ENCODE measurements at regions of chr11 and their contacts with region 1.

Region 1: GRCh38 chr11:130069684-130070108 is at the start of gene APLP2:
- DNase-seq: peak; percentile 98 to 99 (median 99)
- H3K4me3 ChIP-seq: peak within 1 kb of the TSS; percentile 80 to 96 (median 96)
- H3K4me3 Mint-ChIP-seq: peak within 1 kb of the TSS; percentile 92 to 99
- H3K27ac ChIP-seq: peak within 1 kb of the TSS; percentile 76 to 86
- H3K27ac Mint-ChIP-seq: peak within 1 kb of the TSS; percentile 93 to 98 (median 97)
- H3K4me1 ChIP-seq: peaks cover 39 to 50% of the 10 kb centered on the region in 2 donors
- H3K4me1 Mint-ChIP-seq: peaks cover 45% of the 10 kb centered on the region
- H3K27me3 ChIP-seq: no peaks in the 10 kb centered on the region
- H3K27me3 Mint-ChIP-seq: no peaks in the 10 kb centered on the region
- CTCF ChIP-seq: no peak
- polyA plus RNA-seq, gene APLP2: 486 to 622 (median 591) TPM

Region 2: DNA sequence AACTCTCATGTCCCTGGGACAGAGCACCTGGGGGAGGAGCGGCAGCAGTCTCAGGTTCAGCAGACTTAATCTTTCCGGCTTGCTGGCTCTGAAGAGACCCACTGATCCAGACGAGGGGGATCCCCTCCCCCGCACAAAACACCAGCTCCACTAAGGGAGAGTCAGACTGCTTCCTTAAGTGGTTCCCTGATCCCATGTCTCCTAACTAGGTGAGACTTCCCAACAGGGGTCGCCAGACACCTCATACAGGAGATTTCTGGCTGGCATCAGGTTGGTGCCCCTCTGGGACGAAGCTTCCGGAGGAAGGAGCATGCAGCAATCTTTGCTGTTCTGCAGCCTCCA is 411.2 kb before region 1 on chr11:
- intact Hi-C with region 1: no loop called
- DNase-seq: no peak
- H3K4me3 ChIP-seq: no peak overlapping the region
- H3K4me3 Mint-ChIP-seq: no peak overlapping the region
- H3K27ac ChIP-seq: no peak overlapping the region
- H3K27ac Mint-ChIP-seq: peak overlapping the region in 1 of 7 donors; percentile 42
- H3K4me1 ChIP-seq: no peaks in the 10 kb centered on the region
- H3K4me1 Mint-ChIP-seq: no peaks in the 10 kb centered on the region
- H3K27me3 ChIP-seq: no peaks in the 10 kb centered on the region
- H3K27me3 Mint-ChIP-seq: peaks cover 0 to 2% (median 0%) of the 10 kb centered on the region in 3 donors
- CTCF ChIP-seq: no peak

Region 3: GRCh38 chr11:129922674-129923073 is 147.0 kb before region 1 on chr11:
- intact Hi-C with region 1: loop called in 1 of 2 experiments (anchors 10 kb)
- DNase-seq: no peak
- H3K4me3 ChIP-seq: no peak overlapping the region
- H3K4me3 Mint-ChIP-seq: no peak overlapping the region
- H3K27ac ChIP-seq: no peak overlapping the region
- H3K27ac Mint-ChIP-seq: no peak overlapping the region
- H3K4me1 ChIP-seq: peaks cover 16 to 28% of the 10 kb centered on the region in 2 donors
- H3K4me1 Mint-ChIP-seq: peaks cover 28% of the 10 kb centered on the region
- H3K27me3 ChIP-seq: no peaks in the 10 kb centered on the region
- H3K27me3 Mint-ChIP-seq: no peaks in the 10 kb centered on the region
- CTCF ChIP-seq: no peak

Region 4: DNA sequence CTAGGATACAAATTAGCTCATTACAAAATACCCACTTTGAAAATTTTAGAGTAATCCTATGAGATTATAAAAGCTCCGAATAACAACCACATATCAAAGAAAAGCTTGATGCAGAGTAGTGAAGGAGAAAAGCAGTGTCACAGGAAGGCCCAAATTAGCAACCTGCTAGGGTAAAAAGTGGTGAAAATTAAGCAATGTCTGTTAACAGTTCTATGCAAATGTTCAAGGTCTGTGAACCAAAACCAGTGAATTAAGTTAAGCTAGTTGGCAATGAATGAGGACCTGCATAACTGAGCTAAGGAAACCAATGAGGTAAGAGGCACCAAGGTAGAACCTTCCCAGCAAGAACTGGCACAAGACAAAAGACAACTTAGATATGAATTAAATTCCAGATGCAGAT is 96.6 kb before region 1 on chr11:
- intact Hi-C with region 1: no loop called
- DNase-seq: peak in 1 of 3 donors; percentile 8
- H3K4me3 ChIP-seq: no peak overlapping the region
- H3K4me3 Mint-ChIP-seq: no peak overlapping the region
- H3K27ac ChIP-seq: peak overlapping the region; percentile 26 to 69
- H3K27ac Mint-ChIP-seq: peak overlapping the region in 6 of 7 donors; percentile 22 to 79 (median 61)
- H3K4me1 ChIP-seq: peaks cover 51 to 75% of the 10 kb centered on the region in 2 donors
- H3K4me1 Mint-ChIP-seq: peaks cover 77% of the 10 kb centered on the region
- H3K27me3 ChIP-seq: no peaks in the 10 kb centered on the region
- H3K27me3 Mint-ChIP-seq: peaks cover 0 to 4% (median 0%) of the 10 kb centered on the region in 3 donors
- CTCF ChIP-seq: no peak

Region 5: DNA sequence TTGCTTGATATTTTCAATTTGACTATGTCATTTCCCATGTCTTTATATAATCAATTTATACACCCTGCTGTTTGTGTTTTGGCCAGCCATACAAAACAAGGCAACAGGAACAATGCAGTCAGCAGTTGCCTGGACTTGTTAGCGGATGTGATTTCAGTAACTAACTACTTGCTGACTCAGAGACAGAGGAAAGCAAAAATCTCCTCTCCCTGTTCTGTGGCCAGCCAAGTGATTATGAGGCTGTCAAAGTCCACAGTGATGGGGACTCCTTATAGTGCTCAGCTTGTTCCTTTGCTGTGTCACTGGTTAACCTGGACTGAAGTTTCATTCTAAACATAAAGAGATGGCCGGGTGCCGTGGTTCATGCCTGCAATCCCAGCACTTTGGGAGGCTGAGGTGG is 32.6 kb before region 1 on chr11:
- intact Hi-C with region 1: no loop called
- DNase-seq: peak; percentile 39 to 54 (median 50)
- H3K4me3 ChIP-seq: no peak overlapping the region
- H3K4me3 Mint-ChIP-seq: no peak overlapping the region
- H3K27ac ChIP-seq: no peak overlapping the region
- H3K27ac Mint-ChIP-seq: peak overlapping the region in 5 of 7 donors; percentile 13 to 78 (median 18)
- H3K4me1 ChIP-seq: peaks cover 7 to 23% of the 10 kb centered on the region in 2 donors
- H3K4me1 Mint-ChIP-seq: peaks cover 17% of the 10 kb centered on the region
- H3K27me3 ChIP-seq: no peaks in the 10 kb centered on the region
- H3K27me3 Mint-ChIP-seq: peaks cover 2 to 5% (median 2%) of the 10 kb centered on the region in 3 donors
- CTCF ChIP-seq: no peak

Region 6: DNA sequence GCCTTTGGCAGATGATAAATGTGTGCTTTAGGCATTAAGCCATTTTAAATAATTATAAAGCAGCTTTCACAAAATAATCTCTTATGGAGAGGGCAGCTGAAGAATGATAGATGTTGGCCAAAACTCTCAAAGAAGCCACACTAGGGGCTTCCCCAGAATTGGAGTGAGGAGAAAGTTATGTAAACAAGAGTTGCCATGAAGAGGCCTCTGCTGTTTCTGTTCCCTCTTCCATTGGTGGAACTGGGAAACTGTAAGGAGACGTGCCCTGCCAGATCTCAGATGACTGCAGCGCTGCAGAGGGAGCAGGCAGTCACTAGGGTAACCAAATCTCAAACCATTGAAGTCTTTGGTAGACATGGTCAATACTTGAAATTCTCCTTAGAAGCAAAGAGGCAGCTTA is 19.4 kb before region 1 on chr11:
- intact Hi-C with region 1: loop called in 1 of 2 experiments (anchors 2 kb)
- DNase-seq: peak; percentile 72 to 89 (median 84)
- H3K4me3 ChIP-seq: peak overlapping the region in 1 of 3 experiments; percentile 50
- H3K4me3 Mint-ChIP-seq: peak overlapping the region in 1 of 2 donors; percentile 73
- H3K27ac ChIP-seq: peak overlapping the region; percentile 84 to 95
- H3K27ac Mint-ChIP-seq: peak overlapping the region; percentile 93 to 99 (median 97)
- H3K4me1 ChIP-seq: peaks cover 56 to 72% of the 10 kb centered on the region in 2 donors
- H3K4me1 Mint-ChIP-seq: peaks cover 56% of the 10 kb centered on the region
- H3K27me3 ChIP-seq: no peaks in the 10 kb centered on the region
- H3K27me3 Mint-ChIP-seq: no peaks in the 10 kb centered on the region
- CTCF ChIP-seq: no peak

Region 7: GRCh38 chr11:130124096-130124495 is 54.4 kb after region 1 on chr11:
- intact Hi-C with region 1: loop called (anchors 2 to 5 kb)
- DNase-seq: peak; percentile 95 to 99 (median 98)
- H3K4me3 ChIP-seq: peak overlapping the region in 1 of 3 experiments; percentile 60
- H3K4me3 Mint-ChIP-seq: peak overlapping the region; percentile 62 to 72
- H3K27ac ChIP-seq: peak overlapping the region; percentile 91 to 96
- H3K27ac Mint-ChIP-seq: peak overlapping the region; percentile 98 to 100 (median 100)
- H3K4me1 ChIP-seq: peaks cover 77 to 85% of the 10 kb centered on the region in 2 donors
- H3K4me1 Mint-ChIP-seq: peaks cover 80% of the 10 kb centered on the region
- H3K27me3 ChIP-seq: no peaks in the 10 kb centered on the region
- H3K27me3 Mint-ChIP-seq: peaks cover 0 to 4% (median 2%) of the 10 kb centered on the region in 3 donors
- CTCF ChIP-seq: no peak

Region 8: DNA sequence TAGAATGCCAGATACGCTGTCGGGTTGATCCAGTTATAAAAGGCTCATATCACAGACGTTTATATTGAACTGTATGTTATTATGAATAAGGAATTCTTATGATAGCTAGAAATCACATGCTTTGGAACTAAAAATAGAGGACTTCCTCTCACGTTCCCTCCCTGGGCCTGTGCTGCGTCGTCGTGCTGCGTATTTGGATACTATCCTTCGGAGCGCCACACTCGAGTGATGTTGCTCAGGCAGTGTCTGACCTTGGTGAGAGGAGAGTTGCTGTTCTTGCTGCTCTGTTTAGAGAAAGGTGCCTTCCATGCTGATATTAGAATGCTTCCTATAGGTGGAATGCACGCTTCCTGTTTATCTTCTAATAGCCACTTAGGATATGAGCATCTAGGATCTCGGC is 69.7 kb after region 1 on chr11:
- intact Hi-C with region 1: no loop called
- DNase-seq: no peak
- H3K4me3 ChIP-seq: no peak overlapping the region
- H3K4me3 Mint-ChIP-seq: no peak overlapping the region
- H3K27ac ChIP-seq: peak overlapping the region in 1 of 2 donors; percentile 57
- H3K27ac Mint-ChIP-seq: peak overlapping the region in 2 of 7 donors; percentile 21 to 64
- H3K4me1 ChIP-seq: peaks cover 0 to 3% of the 10 kb centered on the region in 2 donors
- H3K4me1 Mint-ChIP-seq: peaks cover 4% of the 10 kb centered on the region
- H3K27me3 ChIP-seq: no peaks in the 10 kb centered on the region
- H3K27me3 Mint-ChIP-seq: peaks cover 0 to 2% (median 0%) of the 10 kb centered on the region in 3 donors
- CTCF ChIP-seq: no peak